H1 (cell line): ENCODE measurements at regions of chr20 and their contacts with region 1.

Region 1: DNA sequence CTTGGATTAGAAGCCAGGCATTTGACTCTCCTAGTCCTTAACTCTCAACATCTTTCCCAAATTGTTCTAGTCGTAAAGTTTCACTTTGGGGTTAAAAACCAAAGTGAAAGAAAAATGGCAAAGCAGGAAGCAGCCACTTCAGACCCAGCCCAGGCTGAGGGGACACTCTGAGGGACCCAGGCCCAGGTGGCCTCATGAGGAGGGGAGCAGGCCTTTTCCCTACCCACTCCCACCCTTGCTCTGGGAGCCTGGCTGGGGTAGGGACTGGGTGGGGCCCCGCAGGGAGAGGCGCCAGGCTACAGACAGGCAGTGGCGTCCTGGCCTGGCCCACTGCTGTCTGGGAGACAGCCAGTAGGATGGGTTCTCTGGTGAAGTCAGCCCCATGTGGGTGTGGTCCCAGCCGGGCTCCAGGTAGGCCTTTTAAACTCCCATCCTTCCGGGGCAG is 68.7 kb upstream of the MYL9 start:
- DNase-seq: peak in 1 of 2 experiments; percentile 73
- H3K4me3 ChIP-seq: no peak overlapping the region
- H3K27ac ChIP-seq: no peak overlapping the region; the same call in 1 of the 2 replicates
- H3K4me1 ChIP-seq: peaks cover 0 to 6% (median 4%) of the 10 kb centered on the region in 4 experiments; a peak in 4 of 7 replicates
- H3K27me3 ChIP-seq: no peaks in the 10 kb centered on the region
- CTCF ChIP-seq: no peak
- EP300 ChIP-seq: no peak
- POLR2A ChIP-seq: no peak
- RAD21 ChIP-seq: no peak

Region 2: DNA sequence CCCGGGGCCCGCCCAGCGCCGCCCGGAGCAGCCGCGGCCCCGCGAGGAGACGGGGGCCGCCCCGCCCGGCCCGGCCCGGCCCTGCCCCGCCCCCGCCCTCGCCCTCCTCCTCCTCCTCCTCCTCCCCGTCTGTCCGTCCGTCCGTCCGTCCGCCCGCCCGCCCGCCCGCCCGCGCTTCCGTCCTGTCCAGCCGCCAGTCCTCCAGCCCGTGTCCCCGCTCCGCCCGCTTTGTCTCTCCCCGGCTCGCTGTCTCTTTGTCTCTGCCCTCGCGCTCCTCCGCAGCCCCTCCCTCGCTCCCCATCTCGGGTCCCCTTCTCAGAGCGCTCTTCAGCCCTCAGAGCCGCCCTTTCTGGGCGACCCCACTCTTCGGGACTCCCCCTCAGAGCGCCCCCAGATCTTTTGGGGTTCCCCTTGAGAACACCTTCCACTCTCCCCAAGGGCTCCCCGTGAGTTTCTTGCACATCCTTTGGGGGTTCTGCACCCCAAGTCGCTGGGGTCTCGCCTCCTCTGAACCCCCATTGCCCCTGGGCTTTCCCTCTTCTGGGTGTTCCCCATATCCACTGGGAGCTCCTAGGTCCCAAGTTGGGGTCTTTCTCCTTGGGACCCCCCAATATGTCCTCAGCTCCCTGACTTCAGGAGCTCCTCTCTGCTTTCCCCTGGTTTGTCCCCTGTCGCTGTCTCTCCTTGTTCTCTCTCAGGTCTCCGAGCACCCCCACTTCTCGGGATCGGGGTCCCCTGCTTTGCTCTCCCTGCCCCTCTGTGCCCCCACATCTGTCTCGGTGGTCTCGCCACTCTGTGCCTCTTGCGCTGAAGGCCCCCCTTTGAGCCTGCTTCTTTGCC is 10.8 kb before region 1 on chr20:
- CTCF ChIA-PET with region 1: interaction called, 7 read pairs
- POLR2A ChIA-PET with region 1: interaction called, 11 read pairs
- DNase-seq: peak in 1 of 2 experiments; percentile 62
- H3K4me3 ChIP-seq: peak overlapping the region; percentile 75 to 99 (median 88)
- H3K27ac ChIP-seq: no peak overlapping the region; the same call in 1 of the 2 replicates
- H3K4me1 ChIP-seq: peaks cover 11 to 33% (median 19%) of the 10 kb centered on the region in 4 experiments
- H3K27me3 ChIP-seq: no peaks in the 10 kb centered on the region; a peak in 1 of 7 replicates
- CTCF ChIP-seq: no peak
- EP300 ChIP-seq: no peak
- POLR2A ChIP-seq: no peak; a peak in 2 of 3 replicates
- RAD21 ChIP-seq: no peak

Region 3: GRCh38 chr20:36493013-36493800 is 20.5 kb after region 1 on chr20:
- CTCF ChIA-PET with region 1: interaction called, 18 read pairs
- POLR2A ChIA-PET with region 1: interaction called, 4 read pairs
- DNase-seq: peak in 1 of 2 experiments; percentile 67
- H3K4me3 ChIP-seq: no peak overlapping the region
- H3K27ac ChIP-seq: no peak overlapping the region
- H3K4me1 ChIP-seq: peaks cover 0 to 3% (median 0%) of the 10 kb centered on the region in 4 experiments; a peak in 2 of 7 replicates
- H3K27me3 ChIP-seq: no peaks in the 10 kb centered on the region; a peak in 1 of 7 replicates
- CTCF ChIP-seq: peak; percentile 59 to 79 (median 75)
- EP300 ChIP-seq: no peak
- POLR2A ChIP-seq: no peak
- RAD21 ChIP-seq: peak; percentile 68 to 77